CD8-positive, alpha-beta memory T cell (primary cell): ENCODE measurements at regions of chr22 and their contacts with region 1.

Region 1: GRCh38 chr22:40645579-40646197 is 9.2 kb upstream of the MRTFA start:
- DNase-seq: no peak
- H3K4me3 ChIP-seq: no peak overlapping the region
- H3K4me3 Mint-ChIP-seq: peak overlapping the region in 2 of 7 donors; percentile 8 to 9
- H3K27ac ChIP-seq: no peak overlapping the region
- H3K27ac Mint-ChIP-seq: no peak overlapping the region
- H3K4me1 ChIP-seq: no peaks in the 10 kb centered on the region
- H3K4me1 Mint-ChIP-seq: peaks cover 4 to 10% (median 9%) of the 10 kb centered on the region in 3 donors
- H3K27me3 ChIP-seq: no peaks in the 10 kb centered on the region
- H3K27me3 Mint-ChIP-seq: peaks cover 0 to 3% of the 10 kb centered on the region in 2 donors

Region 2: DNA sequence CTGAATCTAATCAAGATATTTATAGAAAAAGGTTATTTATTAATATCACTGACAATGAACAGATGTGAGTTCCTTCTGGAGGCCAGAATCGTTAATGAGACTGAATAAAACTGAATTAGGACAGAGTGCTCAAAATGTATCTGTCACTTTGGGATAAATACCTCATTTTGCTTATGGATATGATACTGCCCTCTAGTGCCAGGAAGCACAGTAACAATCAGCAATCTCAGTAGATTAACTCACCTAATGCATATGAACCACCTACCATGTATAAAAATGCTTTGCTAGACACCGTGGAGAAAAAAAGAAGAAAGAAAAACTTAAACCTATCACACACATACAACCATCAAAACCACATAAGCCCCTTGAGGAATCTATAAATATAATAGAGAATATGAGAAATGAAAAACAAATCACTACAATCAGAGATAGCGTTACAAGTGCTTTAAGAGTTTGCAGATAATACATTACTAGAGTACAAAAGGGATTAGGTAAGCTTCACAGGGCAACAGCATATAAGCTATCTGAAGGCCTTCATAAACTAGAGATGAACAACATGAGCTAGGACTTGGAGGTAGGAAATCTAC is 157.9 kb before region 1 on chr22:
- CTCF ChIA-PET with region 1: interaction called, 15 read pairs
- POLR2A ChIA-PET with region 1: no interaction called
- DNase-seq: peak in 2 of 5 donors; percentile 13 to 43
- H3K4me3 ChIP-seq: no peak overlapping the region
- H3K4me3 Mint-ChIP-seq: no peak overlapping the region
- H3K27ac ChIP-seq: no peak overlapping the region
- H3K27ac Mint-ChIP-seq: peak overlapping the region in 2 of 8 donors; percentile 1 to 90
- H3K4me1 ChIP-seq: peaks cover 29% of the 10 kb centered on the region
- H3K4me1 Mint-ChIP-seq: peaks cover 19 to 30% (median 25%) of the 10 kb centered on the region in 3 donors
- H3K27me3 ChIP-seq: no peaks in the 10 kb centered on the region
- H3K27me3 Mint-ChIP-seq: no peaks in the 10 kb centered on the region

Region 3: DNA sequence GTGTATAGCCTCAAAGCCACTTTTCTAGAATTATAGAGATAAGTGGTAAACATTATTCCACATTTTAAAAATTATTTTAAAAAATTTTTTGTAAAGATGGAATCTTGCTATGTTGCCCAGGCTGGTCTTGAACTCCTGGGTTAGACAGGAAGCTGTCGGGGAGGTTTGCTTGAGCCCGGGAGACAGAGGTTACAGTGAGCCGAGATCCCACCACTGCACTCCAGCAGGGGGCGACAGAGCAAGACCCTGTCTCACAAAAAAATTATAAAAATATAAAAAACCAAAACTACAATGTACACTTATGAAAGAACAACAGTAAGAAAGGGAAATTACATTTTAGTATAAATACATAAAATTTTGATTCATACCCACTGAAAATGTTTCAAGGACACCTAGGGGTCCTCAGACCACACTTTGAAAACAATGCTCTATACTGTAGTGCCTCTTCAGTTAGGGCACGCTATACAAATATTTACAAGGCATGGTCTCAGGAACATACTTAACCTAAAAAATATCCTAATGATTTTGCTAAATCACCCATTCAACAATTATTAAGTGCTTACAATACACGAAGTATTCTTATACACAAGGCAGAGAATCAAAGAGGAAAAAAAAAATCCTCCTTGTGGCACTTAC is 120.3 kb before region 1 on chr22:
- CTCF ChIA-PET with region 1: interaction called, 48 read pairs
- POLR2A ChIA-PET with region 1: interaction called, 3 read pairs
- DNase-seq: peak; percentile 50 to 71 (median 55)
- H3K4me3 ChIP-seq: no peak overlapping the region
- H3K4me3 Mint-ChIP-seq: no peak overlapping the region
- H3K27ac ChIP-seq: no peak overlapping the region
- H3K27ac Mint-ChIP-seq: peak overlapping the region in 2 of 8 donors; percentile 30 to 53
- H3K4me1 ChIP-seq: peaks cover 6% of the 10 kb centered on the region
- H3K4me1 Mint-ChIP-seq: peaks cover 22 to 33% (median 27%) of the 10 kb centered on the region in 3 donors
- H3K27me3 ChIP-seq: no peaks in the 10 kb centered on the region
- H3K27me3 Mint-ChIP-seq: no peaks in the 10 kb centered on the region

Region 4: GRCh38 chr22:40533712-40534378 is 111.8 kb before region 1 on chr22:
- CTCF ChIA-PET with region 1: interaction called, 48 read pairs
- POLR2A ChIA-PET with region 1: no interaction called
- DNase-seq: peak; percentile 7 to 74 (median 61)
- H3K4me3 ChIP-seq: peak overlapping the region; percentile 50
- H3K4me3 Mint-ChIP-seq: peak overlapping the region; percentile 81 to 90 (median 87)
- H3K27ac ChIP-seq: no peak overlapping the region
- H3K27ac Mint-ChIP-seq: peak overlapping the region; percentile 73 to 95 (median 86)
- H3K4me1 ChIP-seq: peaks cover 46% of the 10 kb centered on the region
- H3K4me1 Mint-ChIP-seq: peaks cover 56 to 70% (median 66%) of the 10 kb centered on the region in 3 donors
- H3K27me3 ChIP-seq: no peaks in the 10 kb centered on the region
- H3K27me3 Mint-ChIP-seq: no peaks in the 10 kb centered on the region